Ascending aorta (tissue), 2 donors: ENCODE measurements at regions of chr11 and their contacts with region 1.

Region 1: DNA sequence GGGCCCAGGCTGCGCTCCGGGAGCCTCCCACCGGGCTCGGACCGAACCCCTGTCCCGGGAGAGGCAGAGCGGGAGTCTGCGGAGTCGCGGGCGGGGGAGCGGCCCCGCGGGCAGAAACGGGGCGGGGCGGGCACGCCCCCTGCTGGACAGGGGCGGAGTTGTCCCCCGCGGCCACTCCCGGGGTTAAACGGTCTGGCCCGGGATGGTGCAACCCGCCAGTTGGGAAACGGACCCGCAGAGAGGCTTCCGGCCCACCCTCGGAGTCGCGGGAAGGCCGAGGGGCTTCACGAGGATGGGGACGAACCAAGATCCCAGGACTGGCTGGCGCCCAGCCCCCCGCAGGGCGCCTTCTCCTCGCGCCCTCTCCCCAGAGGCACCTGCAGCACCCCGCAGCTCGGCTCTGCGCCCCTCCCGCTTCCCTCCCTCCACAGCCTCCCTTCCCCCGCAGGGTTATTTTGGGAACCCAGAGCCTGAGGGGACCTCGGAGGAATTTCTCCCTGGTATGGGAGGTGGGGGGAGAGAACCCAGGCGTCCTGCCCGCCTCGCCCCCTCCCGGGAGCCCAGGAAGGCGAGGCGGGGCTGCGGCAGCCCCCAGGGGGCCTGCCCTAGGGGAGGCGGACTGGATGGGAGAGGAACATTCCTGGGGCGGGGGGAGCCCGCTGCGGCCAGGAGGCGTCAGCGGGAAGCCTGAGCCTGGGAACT is 902 bp downstream of the RASGRP2 start:
- DNase-seq: peak; percentile 34 to 90
- H3K4me3 ChIP-seq: peak overlapping the region; percentile 86 to 89
- H3K27ac ChIP-seq: peak overlapping the region; percentile 91 to 98
- H3K4me1 ChIP-seq: peaks cover 4 to 11% of the 10 kb centered on the region in 2 donors
- H3K27me3 ChIP-seq: no peaks in the 10 kb centered on the region
- CTCF ChIP-seq: peak; percentile 76 to 88 (median 81)

Region 2: DNA sequence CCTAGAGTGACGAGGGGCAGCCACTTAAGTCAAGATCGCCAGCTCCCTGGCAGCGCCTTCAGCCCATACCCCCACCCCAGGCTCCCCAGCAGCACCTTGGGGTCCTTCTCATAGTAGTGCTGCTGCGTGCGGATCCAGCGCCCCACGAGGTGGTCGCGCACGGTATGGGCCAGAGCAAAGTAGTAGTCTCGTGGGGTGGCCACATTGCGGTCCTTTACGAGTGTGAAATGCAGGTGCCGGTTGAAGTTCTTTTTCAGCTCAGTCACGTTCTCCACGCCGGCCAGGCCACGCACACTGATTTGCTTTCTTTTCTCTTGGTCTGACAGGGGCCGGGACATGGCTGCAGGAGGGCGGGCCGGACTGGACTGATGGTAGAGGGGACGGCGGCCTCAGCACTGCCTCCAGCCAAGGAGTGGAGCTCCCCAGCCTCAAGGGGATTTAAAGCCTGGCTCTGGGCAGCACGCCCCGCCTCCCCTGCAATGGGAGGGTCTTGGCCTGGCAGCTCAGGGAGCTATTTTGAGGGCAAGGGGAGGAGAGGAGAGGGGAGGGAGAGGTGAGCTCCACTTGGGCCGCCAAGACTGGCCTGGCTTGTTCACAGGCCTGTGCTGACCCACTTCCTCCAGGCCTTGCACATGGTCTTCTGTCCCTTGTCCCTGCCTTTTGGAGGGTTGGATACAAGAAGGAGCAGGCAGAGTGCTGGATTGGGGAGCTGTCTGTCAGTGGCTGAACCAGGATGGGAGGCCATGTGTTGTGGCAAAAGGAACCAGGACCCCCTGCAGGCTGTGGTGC is 16.7 kb after region 1 on chr11 and contains the start of gene PYGM:
- intact Hi-C with region 1: loop called (anchors 1 kb)
- DNase-seq: peak; percentile 60 to 95
- H3K4me3 ChIP-seq: peak within 1 kb of the TSS; percentile 42 to 57
- H3K27ac ChIP-seq: peak within 1 kb of the TSS; percentile 75 to 80
- H3K4me1 ChIP-seq: peaks cover 22 to 48% of the 10 kb centered on the region in 2 donors
- H3K27me3 ChIP-seq: no peaks in the 10 kb centered on the region
- CTCF ChIP-seq: no peak
- total RNA-seq, gene PYGM: 13.9 TPM

Region 3: GRCh38 chr11:64803163-64803845 is 60.3 kb after region 1 on chr11 and contains the start of gene MAP4K2:
- intact Hi-C with region 1: loop called (anchors 2 kb)
- DNase-seq: peak; percentile 51 to 95
- H3K4me3 ChIP-seq: peak within 1 kb of the TSS; percentile 65 to 80
- H3K27ac ChIP-seq: peak within 1 kb of the TSS; percentile 91 to 94
- H3K4me1 ChIP-seq: peaks cover 8 to 18% of the 10 kb centered on the region in 2 donors
- H3K27me3 ChIP-seq: no peaks in the 10 kb centered on the region
- CTCF ChIP-seq: peak in 1 of 3 experiments; percentile 15
- total RNA-seq, gene MAP4K2: 34.0 TPM